Breast epithelium (tissue), 4 donors: ENCODE measurements at regions of chr1 and their contacts with region 1.

Region 1: GRCh38 chr1:155250633-155251449 is 4.4 kb downstream of the ENTREP3 start:
- DNase-seq: peak; percentile 86 to 92
- H3K4me3 ChIP-seq: peak overlapping the region; percentile 20 to 52 (median 27)
- H3K27ac ChIP-seq: peak overlapping the region; percentile 8 to 41
- H3K4me1 ChIP-seq: peaks cover 7 to 10% of the 10 kb centered on the region in 2 donors
- H3K27me3 ChIP-seq: no peaks in the 10 kb centered on the region
- CTCF ChIP-seq: peak; percentile 98 to 99 (median 98)
- POLR2A ChIP-seq: no peak

Region 2: DNA sequence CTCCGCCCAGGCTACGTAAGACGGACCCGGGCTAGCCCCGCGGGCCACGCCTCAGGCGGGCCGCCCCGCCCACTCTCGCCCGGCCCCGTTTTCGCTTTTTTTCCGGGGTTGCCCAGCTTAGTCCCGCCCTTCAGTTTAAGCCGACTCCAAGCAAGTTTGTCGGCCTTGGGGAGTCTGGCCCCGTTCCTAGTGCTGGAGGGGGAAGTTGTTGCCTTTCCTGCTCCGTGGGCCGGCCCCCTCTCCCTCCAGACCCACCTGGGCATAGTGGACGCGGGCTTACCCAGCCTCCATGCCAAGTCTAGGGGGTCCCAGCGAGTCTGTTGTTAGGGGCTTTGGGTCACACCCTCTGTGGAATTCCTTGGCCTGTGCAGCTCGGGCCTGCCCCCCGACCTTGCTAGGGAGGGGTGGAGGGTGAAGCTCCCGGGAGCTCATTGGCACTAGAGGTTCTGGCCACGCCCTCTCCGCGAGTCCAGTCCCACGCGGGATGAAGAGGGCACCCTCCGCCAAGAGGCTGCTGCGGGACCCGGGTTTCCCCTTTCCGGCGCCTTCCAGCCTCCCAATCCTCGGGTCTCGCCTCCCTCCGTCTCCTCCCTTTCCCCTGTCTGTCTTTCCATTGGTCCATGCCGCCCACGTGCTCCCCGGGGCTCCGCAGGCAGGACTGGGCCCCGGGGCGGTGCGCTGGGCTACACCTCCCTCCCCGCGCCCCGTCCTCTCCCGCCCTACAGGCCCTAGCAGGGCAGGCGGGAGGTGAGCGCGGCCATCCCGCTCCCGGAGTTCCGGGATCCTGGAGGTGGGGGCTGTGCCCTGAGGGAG is 73.2 kb after region 1 on chr1:
- intact Hi-C with region 1: loop called (anchors 5 kb)
- DNase-seq: peak; percentile 93 to 94
- H3K4me3 ChIP-seq: peak overlapping the region; percentile 73 to 82 (median 79)
- H3K27ac ChIP-seq: peak overlapping the region; percentile 90 to 97
- H3K4me1 ChIP-seq: peaks cover 5 to 9% of the 10 kb centered on the region in 2 donors
- H3K27me3 ChIP-seq: no peaks in the 10 kb centered on the region
- CTCF ChIP-seq: peak in 1 of 3 donors; percentile 11
- POLR2A ChIP-seq: peak; percentile 58

Region 3: DNA sequence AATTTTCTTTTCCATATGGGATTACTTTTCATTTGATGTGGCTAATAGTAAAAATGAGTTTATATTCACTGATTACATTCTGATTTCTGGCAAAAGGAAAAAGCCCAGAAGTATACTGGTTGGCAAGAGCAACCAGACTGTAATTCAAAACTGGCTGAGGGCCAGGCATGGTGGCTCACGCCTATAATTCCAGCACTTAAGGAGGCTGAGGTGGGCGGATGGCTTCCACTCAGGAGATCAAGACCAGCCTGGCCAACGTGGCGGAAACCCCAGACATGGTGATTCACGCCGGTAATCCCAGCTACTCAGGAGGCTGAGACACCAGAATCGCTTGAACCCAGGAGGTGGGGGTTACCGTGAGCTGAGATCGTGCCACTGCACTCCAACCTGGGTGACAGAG is 623.0 kb after region 1 on chr1:
- intact Hi-C with region 1: no loop called
- DNase-seq: no peak
- H3K4me3 ChIP-seq: no peak overlapping the region
- H3K27ac ChIP-seq: no peak overlapping the region
- H3K4me1 ChIP-seq: no peaks in the 10 kb centered on the region
- H3K27me3 ChIP-seq: no peaks in the 10 kb centered on the region
- CTCF ChIP-seq: no peak
- POLR2A ChIP-seq: no peak